ENCODE measurements at regions of chr2 and their contacts with region 1.

Region 1: GRCh38 chr2:46887028-46887885 is 28.3 kb downstream of the MCFD2 start:
- DNase-seq: no peak
- H3K4me3 Mint-ChIP-seq: no peak overlapping the region
- H3K27ac Mint-ChIP-seq: peak overlapping the region; percentile 55
- H3K4me1 Mint-ChIP-seq: peaks cover 2% of the 10 kb centered on the region
- H3K27me3 Mint-ChIP-seq: peaks cover 16% of the 10 kb centered on the region

Region 2: GRCh38 chr2:46650556-46651001 is 236.7 kb before region 1 on chr2:
- intact Hi-C with region 1: loop called (anchors 5 kb)
- DNase-seq: peak; percentile 90
- H3K4me3 Mint-ChIP-seq: no peak overlapping the region
- H3K27ac Mint-ChIP-seq: no peak overlapping the region
- H3K4me1 Mint-ChIP-seq: no peaks in the 10 kb centered on the region
- H3K27me3 Mint-ChIP-seq: peaks cover 26% of the 10 kb centered on the region

Region 3: GRCh38 chr2:46776687-46777327 is 110.5 kb before region 1 on chr2:
- intact Hi-C with region 1: loop called (anchors 1 kb)
- DNase-seq: peak; percentile 82
- H3K4me3 Mint-ChIP-seq: no peak overlapping the region
- H3K27ac Mint-ChIP-seq: no peak overlapping the region
- H3K4me1 Mint-ChIP-seq: no peaks in the 10 kb centered on the region
- H3K27me3 Mint-ChIP-seq: peaks cover 12% of the 10 kb centered on the region

Measured in activated CD4-positive, alpha-beta T cell treated with anti-CD3 and anti-CD28 coated beads, Interleukin-2, amount 10 ng/mL, durations not matched to agents 24 days and 14 days (primary cell).